K562 (cell line): ENCODE measurements at regions of chr2 and their contacts with region 1.

Region 1: DNA sequence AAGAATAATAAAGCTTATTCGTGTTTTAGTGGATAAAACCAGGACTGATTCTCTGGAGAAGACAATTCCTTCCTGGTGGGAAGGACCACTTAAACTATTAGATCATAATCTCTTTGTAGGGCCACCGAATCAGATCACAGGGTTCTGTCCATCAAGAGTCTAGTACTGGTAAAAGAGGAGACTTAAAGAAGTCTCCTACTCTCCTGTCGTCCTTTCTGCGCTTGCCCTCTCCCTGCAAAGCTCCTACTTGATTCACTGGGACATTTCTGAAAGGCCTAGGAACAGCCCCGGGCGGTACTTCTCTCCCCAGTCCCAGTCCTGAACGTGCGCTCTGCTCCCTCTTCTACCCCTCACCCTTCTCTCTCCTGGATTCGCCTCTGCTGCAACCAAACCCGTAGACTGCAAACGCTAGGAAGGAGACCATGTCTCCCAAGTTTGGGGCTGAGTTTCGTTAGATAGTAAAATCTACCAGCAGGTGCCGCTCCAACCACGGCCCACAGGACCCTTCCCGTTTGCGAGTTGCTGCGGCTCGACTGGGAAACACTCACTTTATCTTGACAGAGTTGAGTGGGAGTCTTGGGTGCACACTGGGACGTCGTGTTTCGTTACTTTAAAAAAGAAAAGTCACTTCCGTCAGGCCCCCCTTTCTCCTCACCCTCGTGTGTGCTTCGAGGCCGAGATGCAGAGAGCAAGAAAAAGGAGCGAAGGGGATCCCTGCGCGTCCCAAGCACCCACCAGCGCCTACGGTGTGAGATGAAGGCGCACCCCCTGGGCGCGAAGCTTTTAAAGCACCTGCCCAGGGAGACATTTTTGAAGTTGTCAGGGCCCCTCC is 923 bp downstream of the FIGLA start:
- DNase-seq: peak; percentile 52 to 78 (median 62)
- ATAC-seq: peak; percentile 90
- H3K4me3 ChIP-seq: no peak overlapping the region
- H3K27ac ChIP-seq: no peak overlapping the region
- H3K4me1 ChIP-seq: peaks cover 0 to 10% of the 10 kb centered on the region in 2 experiments; a peak in 3 of 5 replicates
- H3K27me3 ChIP-seq: peaks cover 6 to 16% of the 10 kb centered on the region in 2 experiments
- CTCF ChIP-seq: peak; percentile 86 to 87 (median 86)
- EP300 ChIP-seq: no peak
- POLR2A ChIP-seq: no peak
- RAD21 ChIP-seq: peak; percentile 53 to 77

Region 2: DNA sequence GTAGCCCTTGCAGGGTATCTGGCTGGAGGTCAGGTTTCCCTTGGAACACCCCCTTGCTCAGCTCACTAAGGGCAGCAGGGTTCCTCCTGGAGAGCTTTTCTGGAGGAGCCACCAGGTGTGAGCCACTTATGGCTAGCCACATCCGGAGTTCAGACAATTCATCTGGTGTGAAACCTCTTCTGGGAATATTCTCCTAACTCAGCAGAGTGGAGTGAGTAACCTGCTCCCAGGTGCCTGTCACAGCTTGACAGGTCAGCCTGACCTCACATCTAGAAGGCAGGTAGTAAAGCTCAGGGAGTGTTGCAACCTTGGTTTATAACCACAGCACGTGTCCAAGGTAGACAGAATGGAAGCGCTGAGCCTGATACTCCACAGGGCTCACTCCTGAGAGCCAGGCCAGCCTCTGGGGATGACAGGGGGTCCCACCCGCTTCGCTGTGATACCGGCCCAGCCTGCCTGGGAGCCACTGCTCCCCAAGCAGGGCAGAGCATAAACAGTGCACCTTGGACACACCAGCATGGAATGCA is 173.3 kb before region 1 on chr2:
- CTCF ChIA-PET with region 1: no interaction called
- POLR2A ChIA-PET with region 1: no interaction called
- in situ Hi-C with region 1: no loop called
- intact Hi-C with region 1: no loop called
- DNase-seq: no peak
- ATAC-seq: no peak
- H3K4me3 ChIP-seq: no peak overlapping the region
- H3K27ac ChIP-seq: no peak overlapping the region
- H3K4me1 ChIP-seq: no peaks in the 10 kb centered on the region
- H3K27me3 ChIP-seq: peaks cover 0 to 18% of the 10 kb centered on the region in 2 experiments; a peak in 3 of 5 replicates
- CTCF ChIP-seq: no peak
- EP300 ChIP-seq: no peak
- POLR2A ChIP-seq: no peak
- RAD21 ChIP-seq: no peak

Region 3: GRCh38 chr2:70861777-70862625 is 72.5 kb after region 1 on chr2:
- CTCF ChIA-PET with region 1: no interaction called
- POLR2A ChIA-PET with region 1: no interaction called
- in situ Hi-C with region 1: no loop called
- intact Hi-C with region 1: loop called (anchors 5 kb)
- DNase-seq: peak; percentile 79 to 88 (median 85)
- ATAC-seq: peak; percentile 99
- H3K4me3 ChIP-seq: no peak overlapping the region
- H3K27ac ChIP-seq: no peak overlapping the region
- H3K4me1 ChIP-seq: no peaks in the 10 kb centered on the region
- H3K27me3 ChIP-seq: peaks cover 31 to 40% of the 10 kb centered on the region in 2 experiments; a peak in 3 of 5 replicates
- CTCF ChIP-seq: peak; percentile 98
- EP300 ChIP-seq: no peak
- POLR2A ChIP-seq: no peak
- RAD21 ChIP-seq: peak; percentile 44 to 85; a peak in 3 of 4 replicates